ENCODE measurements at regions of chrX and their contacts with region 1.

Region 1: GRCh38 chrX:19334945-19335626 is 8.6 kb upstream of the PDHA1 start:
- DNase-seq: peak; percentile 39 to 89
- ATAC-seq: peak; percentile 64 to 79
- H3K4me3 ChIP-seq: peak overlapping the region; percentile 32
- H3K27ac ChIP-seq: peak overlapping the region; percentile 20 to 39; a peak in 4 of 6 replicates
- H3K4me1 ChIP-seq: no peaks in the 10 kb centered on the region
- CTCF ChIP-seq: peak; percentile 80
- EP300 ChIP-seq: no peak
- POLR2A ChIP-seq: no peak
- RAD21 ChIP-seq: peak; percentile 64 to 71

Region 2: GRCh38 chrX:18390941-18391538 is 944.0 kb before region 1 on chrX:
- CTCF ChIA-PET with region 1: interaction called, 16 read pairs
- POLR2A ChIA-PET with region 1: no interaction called
- DNase-seq: peak; percentile 34 to 77
- ATAC-seq: peak; percentile 73; a peak in 5 of 6 replicates
- H3K4me3 ChIP-seq: no peak overlapping the region
- H3K27ac ChIP-seq: peak overlapping the region in 1 of 2 experiments; percentile 33; a peak in 1 of 6 replicates
- H3K4me1 ChIP-seq: 0 out of 3 replicates have a peak, but pooled peaks cover 3% of the 10 kb centered on the region
- CTCF ChIP-seq: peak; percentile 79
- EP300 ChIP-seq: no peak
- POLR2A ChIP-seq: no peak
- RAD21 ChIP-seq: peak; percentile 81 to 86

Region 3: DNA sequence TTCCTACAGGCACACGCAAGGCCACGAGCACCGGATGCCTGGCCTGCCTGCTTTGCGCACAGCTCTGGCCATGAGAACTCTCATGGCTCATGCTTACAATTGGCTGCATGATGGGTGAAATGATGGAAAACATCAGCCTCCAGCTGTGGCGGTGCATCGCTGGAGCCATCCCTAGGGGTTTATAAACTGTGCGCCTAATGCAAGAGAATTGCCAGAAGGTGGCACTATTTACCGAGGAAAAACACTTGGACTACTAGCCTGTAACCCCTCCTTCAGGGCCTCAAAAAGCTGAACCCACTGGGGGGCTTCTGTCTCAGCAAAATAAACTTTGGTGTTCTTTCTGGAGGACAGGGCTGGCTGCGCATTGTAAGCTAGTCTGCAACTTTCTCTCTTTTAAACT is 403.1 kb before region 1 on chrX:
- CTCF ChIA-PET with region 1: interaction called, 34 read pairs
- POLR2A ChIA-PET with region 1: no interaction called
- DNase-seq: peak; percentile 16 to 35
- ATAC-seq: peak; percentile 54 to 91; a peak in 3 of 6 replicates
- H3K4me3 ChIP-seq: no peak overlapping the region
- H3K27ac ChIP-seq: no peak overlapping the region
- H3K4me1 ChIP-seq: no peaks in the 10 kb centered on the region
- CTCF ChIP-seq: peak; percentile 67
- EP300 ChIP-seq: no peak
- POLR2A ChIP-seq: no peak
- RAD21 ChIP-seq: peak; percentile 79 to 81

Region 4: DNA sequence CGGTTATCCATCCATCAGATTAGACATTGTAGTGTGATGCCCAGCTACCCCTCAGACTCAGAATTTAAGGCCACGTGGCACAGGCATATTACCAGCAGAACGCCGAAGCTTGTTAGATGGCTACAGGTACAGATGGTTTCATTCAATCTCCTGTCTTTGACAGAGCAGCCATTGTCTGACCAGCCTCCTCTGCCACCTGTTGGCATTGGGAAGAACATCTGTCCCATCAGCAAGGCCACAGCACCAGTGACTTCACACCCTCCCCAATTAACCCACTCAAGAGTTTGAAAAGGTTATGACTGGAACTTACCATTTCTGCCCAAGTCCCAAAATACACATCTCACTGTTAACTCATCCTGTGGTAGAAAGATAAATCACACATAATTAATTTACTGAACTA is 329.2 kb before region 1 on chrX:
- CTCF ChIA-PET with region 1: interaction called, 10 read pairs
- POLR2A ChIA-PET with region 1: no interaction called
- DNase-seq: peak in 1 of 2 experiments; percentile 33
- ATAC-seq: peak; percentile 65 to 70; a peak in 3 of 6 replicates
- H3K4me3 ChIP-seq: no peak overlapping the region
- H3K27ac ChIP-seq: no peak overlapping the region
- H3K4me1 ChIP-seq: no peaks in the 10 kb centered on the region
- CTCF ChIP-seq: peak; percentile 23; the same call in 2 of the 3 replicates
- EP300 ChIP-seq: no peak
- POLR2A ChIP-seq: no peak
- RAD21 ChIP-seq: peak; percentile 40 to 56; a peak in 4 of 5 replicates

Region 5: DNA sequence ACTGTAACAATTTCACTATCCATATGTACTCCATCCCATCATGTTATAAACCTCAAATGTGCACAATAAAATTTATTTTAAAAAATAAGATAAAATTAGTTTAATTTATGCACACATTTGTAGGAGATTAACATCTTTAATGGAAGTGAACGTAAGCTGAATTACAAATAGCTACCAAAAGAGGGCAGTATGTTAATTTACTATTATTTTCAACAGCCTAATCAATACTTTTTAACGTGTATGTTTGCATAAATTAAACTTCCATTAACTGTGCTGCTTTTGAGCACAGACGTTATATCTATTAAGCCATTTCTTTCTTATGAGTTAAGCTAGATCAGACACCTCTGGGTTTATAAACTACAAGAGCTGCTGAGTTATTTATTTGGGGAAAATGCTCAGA is 294.7 kb before region 1 on chrX:
- CTCF ChIA-PET with region 1: interaction called, 23 read pairs
- POLR2A ChIA-PET with region 1: no interaction called
- DNase-seq: no peak
- ATAC-seq: no peak
- H3K4me3 ChIP-seq: no peak overlapping the region
- H3K27ac ChIP-seq: no peak overlapping the region
- H3K4me1 ChIP-seq: peaks cover 2% of the 10 kb centered on the region
- CTCF ChIP-seq: peak; percentile 63
- EP300 ChIP-seq: no peak
- POLR2A ChIP-seq: no peak
- RAD21 ChIP-seq: peak; percentile 62 to 73

Region 6: DNA sequence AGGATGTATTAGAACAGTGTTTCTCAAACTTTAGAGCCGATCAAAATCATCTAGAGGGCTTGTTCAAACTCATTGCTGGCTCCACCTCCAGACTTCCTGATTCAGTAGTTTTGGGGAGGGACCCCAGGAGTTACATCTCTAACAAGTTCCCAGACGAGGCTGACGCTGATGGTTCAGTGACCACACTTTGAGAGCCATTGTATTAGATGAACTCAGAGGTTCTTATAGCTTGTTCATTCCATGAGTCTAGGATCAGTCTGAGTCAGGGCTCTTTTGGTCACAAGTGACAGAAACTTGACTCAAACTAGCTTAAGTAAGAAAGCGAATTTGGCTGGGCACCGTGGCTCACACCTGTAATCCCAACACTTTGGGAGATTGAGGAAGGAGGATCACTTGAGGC is 201.3 kb before region 1 on chrX:
- CTCF ChIA-PET with region 1: no interaction called
- POLR2A ChIA-PET with region 1: no interaction called
- DNase-seq: no peak
- ATAC-seq: no peak
- H3K4me3 ChIP-seq: no peak overlapping the region
- H3K27ac ChIP-seq: no peak overlapping the region; a peak in 1 of 6 replicates
- H3K4me1 ChIP-seq: peaks cover 9% of the 10 kb centered on the region; the same call in 2 of the 3 replicates
- CTCF ChIP-seq: no peak
- EP300 ChIP-seq: no peak
- POLR2A ChIP-seq: no peak
- RAD21 ChIP-seq: no peak

Region 7: GRCh38 chrX:19193565-19193964 is 141.5 kb before region 1 on chrX:
- CTCF ChIA-PET with region 1: no interaction called
- POLR2A ChIA-PET with region 1: no interaction called
- DNase-seq: no peak
- ATAC-seq: no peak
- H3K4me3 ChIP-seq: no peak overlapping the region
- H3K27ac ChIP-seq: no peak overlapping the region
- H3K4me1 ChIP-seq: no peaks in the 10 kb centered on the region
- CTCF ChIP-seq: no peak
- EP300 ChIP-seq: no peak
- POLR2A ChIP-seq: no peak
- RAD21 ChIP-seq: no peak

Region 8: DNA sequence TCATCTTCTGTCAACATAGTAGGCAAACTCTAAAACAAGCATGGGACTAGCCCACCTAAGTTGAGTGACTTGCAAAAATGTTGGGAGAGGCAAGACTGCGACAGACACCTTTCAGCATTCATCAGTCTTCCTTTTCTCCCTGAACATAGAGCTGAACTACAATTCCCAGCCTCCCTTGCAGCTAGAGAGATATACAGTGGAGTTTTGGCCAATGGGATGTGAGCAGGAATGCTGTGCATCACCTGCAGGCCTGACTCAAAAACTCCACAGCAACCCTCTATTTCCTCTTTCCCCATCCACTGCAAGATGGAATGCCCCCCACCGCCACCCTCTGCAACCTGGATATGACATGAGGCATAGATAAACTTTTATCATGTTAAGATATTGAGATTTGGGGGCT is 75.2 kb after region 1 on chrX:
- CTCF ChIA-PET with region 1: no interaction called
- POLR2A ChIA-PET with region 1: no interaction called
- DNase-seq: peak in 1 of 2 experiments; percentile 3
- ATAC-seq: no peak
- H3K4me3 ChIP-seq: no peak overlapping the region
- H3K27ac ChIP-seq: no peak overlapping the region
- H3K4me1 ChIP-seq: no peaks in the 10 kb centered on the region
- CTCF ChIP-seq: no peak
- EP300 ChIP-seq: no peak
- POLR2A ChIP-seq: no peak
- RAD21 ChIP-seq: no peak

Measured in A549 (cell line).